Posterior vena cava (tissue), 2 donors: ENCODE measurements at regions of chr11 and their contacts with region 1.

Region 1: DNA sequence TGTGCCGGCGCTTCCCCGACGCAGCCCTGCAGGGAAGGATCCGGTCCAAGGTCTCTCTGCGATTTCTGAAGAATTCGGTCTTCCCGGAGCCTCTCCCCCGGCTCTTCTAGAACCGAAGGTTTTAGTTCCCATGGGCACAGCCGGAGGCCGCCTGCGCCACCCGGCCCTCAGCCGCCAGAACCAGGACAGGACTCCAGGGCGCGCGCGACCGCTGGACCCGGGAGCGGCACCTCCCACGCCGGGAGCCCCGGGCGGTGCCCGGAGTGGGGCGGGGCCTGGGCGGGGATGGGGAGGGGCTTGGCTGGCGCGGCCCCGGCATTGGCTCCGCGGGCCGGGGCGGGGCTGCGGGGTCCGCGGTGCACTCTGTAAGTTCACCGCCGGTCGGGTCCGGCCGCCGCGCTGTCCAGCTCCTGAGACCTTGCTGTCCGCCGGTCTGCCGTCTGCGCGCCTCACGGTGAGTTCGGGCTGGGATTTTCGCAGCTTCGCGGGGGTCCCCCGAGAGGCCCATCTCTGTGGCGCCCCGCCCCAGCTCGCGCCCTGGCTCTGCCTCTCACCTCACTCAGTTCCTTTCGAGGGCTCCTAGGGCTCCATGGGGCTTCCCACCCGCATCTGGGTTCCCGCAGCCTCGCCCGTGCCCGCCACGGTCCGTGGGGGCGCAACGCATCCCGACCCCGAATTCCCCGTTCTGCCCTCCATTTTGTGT is at the start of gene CDC42EP2:
- DNase-seq: peak; percentile 95
- total RNA-seq, gene CDC42EP2: 15.7 to 16.2 TPM

Region 2: DNA sequence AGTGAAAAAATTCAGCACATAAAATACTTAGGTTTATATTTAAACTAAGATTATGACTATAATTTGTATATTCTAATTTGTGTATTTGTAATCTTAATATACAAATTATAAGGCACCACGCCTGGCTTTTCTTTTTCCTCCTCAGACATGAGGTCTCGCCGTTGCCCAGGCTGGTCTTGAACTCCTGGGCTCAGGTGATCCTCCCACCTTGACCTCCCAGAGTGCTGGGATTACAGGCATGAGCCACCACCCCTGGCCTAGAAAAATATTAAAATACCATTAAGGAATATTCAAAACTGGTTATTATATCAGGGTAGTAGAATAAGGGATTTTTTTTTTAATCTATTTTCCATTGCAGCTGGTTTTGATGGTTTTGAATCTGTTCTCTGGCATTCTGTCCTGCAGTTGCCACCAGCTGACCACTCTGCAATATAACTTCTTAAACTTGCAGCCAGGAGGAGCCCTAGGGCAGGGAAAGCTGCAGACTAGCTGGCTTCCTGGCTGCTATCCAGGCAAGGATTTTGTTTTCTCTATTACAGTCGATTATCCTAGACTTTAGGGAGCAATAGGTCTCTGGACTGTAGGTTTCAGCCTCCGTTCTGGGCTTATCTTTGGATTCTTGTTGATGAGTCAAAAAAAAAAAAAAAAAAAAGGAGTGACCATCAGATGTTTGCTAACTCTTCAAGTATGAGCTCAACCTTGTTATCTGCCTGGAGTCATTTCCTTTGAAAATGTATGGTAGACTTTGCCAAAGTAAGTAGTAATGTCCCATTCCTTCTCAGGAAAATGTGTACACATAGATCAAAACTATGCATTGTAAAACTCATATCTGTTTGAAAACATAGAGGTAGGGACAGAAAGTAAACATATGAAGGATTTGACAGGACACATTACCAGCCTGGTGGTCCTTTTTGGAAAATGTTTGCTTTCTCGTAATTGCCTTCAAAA is 39.6 kb before region 1 on chr11:
- intact Hi-C with region 1: loop called (anchors 2 to 5 kb)
- DNase-seq: no peak